CD8-positive, alpha-beta T cell (primary cell): ENCODE measurements at regions of chr6 and their contacts with region 1.

Region 1: DNA sequence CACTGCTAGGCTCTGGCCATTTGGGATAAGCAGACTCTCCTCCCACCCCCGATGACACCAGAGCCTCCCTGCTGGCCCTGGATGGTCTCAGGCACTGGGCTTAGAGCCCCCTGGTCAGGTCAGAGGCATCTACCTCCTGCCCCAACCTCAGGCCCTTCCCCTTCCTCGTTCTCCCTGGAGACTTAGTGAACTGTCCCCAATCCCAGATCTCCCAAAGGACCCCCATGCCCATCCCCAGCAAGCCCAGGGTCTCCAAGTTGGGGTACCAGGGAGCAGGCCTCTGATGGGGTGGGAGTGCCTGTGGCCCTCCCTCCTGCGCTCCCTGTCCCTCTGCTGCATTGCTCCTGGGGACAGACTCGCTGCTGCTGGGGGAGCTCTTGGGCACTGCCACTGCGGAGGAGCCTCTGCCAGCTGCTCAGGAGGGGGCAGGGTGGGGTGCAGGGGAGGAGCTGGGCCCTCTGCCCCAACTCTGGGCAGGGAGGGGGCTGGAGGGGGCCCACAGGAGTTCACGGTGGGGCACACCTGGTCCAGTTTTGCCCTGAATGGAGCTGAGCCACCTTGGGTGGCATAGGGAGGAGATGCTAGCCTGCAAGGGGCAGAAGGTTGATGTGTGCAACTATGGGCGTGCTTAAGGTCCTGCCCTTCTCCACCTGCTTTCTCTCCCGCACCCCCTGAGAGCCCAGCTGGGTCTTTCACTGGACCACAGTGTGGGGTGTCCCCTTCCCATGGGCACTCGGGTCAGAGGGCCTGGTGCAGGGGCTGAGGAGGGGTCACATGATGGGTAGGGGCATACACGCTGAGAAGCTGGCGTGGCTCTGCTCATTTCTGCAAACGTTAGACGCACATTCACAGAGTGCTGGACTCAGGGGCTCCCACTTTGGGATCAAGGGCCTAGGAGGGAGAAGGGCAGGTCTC is 40.4 kb downstream of the SPDEF start:
- DNase-seq: no peak
- ATAC-seq: no peak
- H3K4me3 ChIP-seq: no peak overlapping the region
- H3K4me3 Mint-ChIP-seq: no peak overlapping the region
- H3K27ac ChIP-seq: no peak overlapping the region
- H3K27ac Mint-ChIP-seq: no peak overlapping the region
- H3K4me1 ChIP-seq: no peaks in the 10 kb centered on the region
- H3K4me1 Mint-ChIP-seq: no peaks in the 10 kb centered on the region
- H3K27me3 ChIP-seq: no peaks in the 10 kb centered on the region
- H3K27me3 Mint-ChIP-seq: no peaks in the 10 kb centered on the region
- CTCF ChIP-seq: no peak

Region 2: DNA sequence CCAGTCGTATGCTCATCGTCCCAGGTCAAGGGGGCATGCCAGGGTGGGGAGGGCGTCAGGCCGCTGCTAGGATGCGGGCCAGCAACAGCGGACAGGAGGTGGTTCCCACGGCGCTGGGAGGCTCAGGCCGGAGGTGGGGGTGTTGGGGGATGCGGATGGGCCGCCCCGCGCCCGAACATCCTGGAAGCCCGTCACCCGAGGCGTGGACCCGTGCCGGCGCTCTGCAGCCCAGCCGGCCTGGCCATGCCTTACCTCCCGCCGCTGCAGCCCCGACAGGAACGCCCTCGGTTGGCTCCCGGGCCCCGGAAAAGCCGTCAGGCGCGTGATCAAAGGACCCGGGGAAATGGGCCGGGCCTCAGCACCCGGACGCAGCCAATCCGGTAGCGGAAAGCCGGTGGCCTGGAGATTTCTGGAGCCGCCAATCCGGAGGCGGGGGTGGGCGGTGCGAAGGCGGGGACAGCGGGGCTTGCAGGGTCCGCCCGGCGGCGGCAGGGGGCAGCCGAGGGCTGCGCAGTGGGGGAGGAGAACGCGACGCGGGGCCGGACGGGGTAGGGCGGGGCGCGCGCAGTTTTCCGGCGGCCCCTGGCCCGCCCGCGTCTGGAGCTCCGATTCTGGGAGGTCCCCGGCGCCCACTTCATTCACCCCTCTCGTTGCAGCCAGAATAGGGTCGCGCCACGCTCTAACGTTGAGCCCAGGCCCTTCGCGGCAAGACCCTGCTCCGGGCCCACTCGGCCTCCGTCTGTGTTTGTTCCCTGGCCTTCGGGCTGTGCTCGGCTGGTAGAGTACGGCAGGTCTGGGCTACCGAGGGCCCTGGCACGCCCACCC is 266.8 kb before region 1 on chr6 and contains the start of gene SMIM29:
- CTCF ChIA-PET with region 1: no interaction called
- POLR2A ChIA-PET with region 1: no interaction called
- intact Hi-C with region 1: no loop called
- DNase-seq: peak; percentile 96 to 99 (median 97)
- ATAC-seq: peak; percentile 91
- H3K4me3 ChIP-seq: peak within 1 kb of the TSS; percentile 87 to 89
- H3K4me3 Mint-ChIP-seq: peak within 1 kb of the TSS; percentile 93
- H3K27ac ChIP-seq: peak within 1 kb of the TSS; percentile 46 to 91
- H3K27ac Mint-ChIP-seq: peak within 1 kb of the TSS; percentile 95
- H3K4me1 ChIP-seq: peaks cover 16% of the 10 kb centered on the region
- H3K4me1 Mint-ChIP-seq: peaks cover 33% of the 10 kb centered on the region
- H3K27me3 ChIP-seq: no peaks in the 10 kb centered on the region
- H3K27me3 Mint-ChIP-seq: no peaks in the 10 kb centered on the region
- CTCF ChIP-seq: peak; percentile 83
- total RNA-seq, gene SMIM29: 12.7 to 14.2 TPM

Region 3: DNA sequence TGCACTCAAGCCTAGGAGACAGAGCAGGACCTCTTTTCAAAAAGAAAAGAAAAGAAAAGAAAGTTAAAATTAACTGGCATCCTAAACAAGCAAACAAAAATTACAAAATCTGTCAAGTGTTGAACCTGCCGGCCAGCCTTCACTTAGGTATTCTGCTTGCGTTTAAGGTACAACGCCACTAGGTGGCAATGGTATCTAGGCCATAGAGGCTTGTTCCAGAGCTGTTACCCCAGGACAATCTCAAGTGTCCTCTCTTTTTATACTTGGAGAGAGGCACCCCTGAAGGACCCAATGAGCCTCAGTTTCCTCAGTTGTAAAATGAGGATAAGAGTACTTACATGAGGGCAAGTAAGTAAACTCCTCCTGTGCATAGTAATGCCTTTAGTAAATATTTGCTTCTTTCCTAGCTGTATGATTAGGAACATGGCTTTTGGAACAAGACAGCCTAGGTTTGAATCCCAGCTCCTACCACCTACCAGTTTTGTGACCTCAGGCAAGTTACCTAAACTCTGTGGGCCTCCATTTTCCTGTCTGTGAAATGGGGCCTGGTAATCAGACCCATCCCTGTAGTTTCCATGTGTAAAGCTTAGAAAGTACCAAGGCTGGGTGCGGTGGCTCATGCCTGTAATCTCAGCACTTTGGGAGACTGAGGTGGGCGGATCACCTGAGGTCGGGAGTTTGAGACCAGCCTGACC is 55.7 kb before region 1 on chr6:
- CTCF ChIA-PET with region 1: interaction called, 11 read pairs
- POLR2A ChIA-PET with region 1: no interaction called
- intact Hi-C with region 1: no loop called
- DNase-seq: peak; percentile 12 to 75 (median 48)
- ATAC-seq: peak; percentile 79
- H3K4me3 ChIP-seq: no peak overlapping the region
- H3K4me3 Mint-ChIP-seq: no peak overlapping the region
- H3K27ac ChIP-seq: no peak overlapping the region
- H3K27ac Mint-ChIP-seq: no peak overlapping the region
- H3K4me1 ChIP-seq: no peaks in the 10 kb centered on the region
- H3K4me1 Mint-ChIP-seq: peaks cover 1% of the 10 kb centered on the region
- H3K27me3 ChIP-seq: peaks cover 0 to 7% of the 10 kb centered on the region in 2 experiments
- H3K27me3 Mint-ChIP-seq: peaks cover 10% of the 10 kb centered on the region
- CTCF ChIP-seq: peak; percentile 63